ENCODE measurements at regions of chr1 and their contacts with region 1.

Region 1: GRCh38 chr1:168312718-168313604 is 32.3 kb downstream of the TBX19 start:
- DNase-seq: no peak
- H3K4me3 ChIP-seq: no peak overlapping the region
- H3K27ac ChIP-seq: no peak overlapping the region
- H3K4me1 ChIP-seq: no peaks in the 10 kb centered on the region
- H3K27me3 ChIP-seq: no peaks in the 10 kb centered on the region
- CTCF ChIP-seq: no peak
- POLR2A ChIP-seq: no peak

Region 2: DNA sequence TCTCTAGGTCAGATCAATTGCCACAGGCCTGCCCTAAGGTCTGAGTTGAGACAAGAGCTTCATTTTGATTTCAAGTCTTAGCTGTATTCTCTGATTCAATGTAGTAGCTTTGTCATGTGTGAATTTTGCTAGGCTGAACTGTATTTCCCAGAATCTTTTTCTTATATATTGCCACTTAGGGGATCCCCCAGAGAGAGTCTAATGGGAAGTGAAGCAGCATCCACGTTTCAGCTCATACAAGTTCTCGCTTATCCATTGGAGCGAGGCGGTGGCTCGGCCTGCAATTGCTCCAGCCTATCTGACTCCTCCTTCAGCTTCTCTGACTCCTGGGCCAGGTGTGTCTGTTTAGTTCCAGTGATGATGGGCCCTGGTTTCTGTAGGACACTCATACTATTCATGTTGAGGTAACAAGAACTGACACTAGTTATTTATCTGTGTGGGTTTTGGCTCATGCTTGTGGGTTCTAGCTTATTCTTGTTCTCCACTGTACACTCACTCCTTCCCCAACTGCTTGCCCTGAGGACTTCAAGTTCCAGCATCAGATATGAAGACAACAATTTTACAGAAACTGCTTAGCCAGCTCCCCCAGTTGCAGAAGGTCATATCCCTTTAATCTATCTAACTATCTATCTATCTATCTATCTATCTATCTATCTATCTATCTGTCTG is 15.9 kb after region 1 on chr1:
- CTCF ChIA-PET with region 1: no interaction called
- POLR2A ChIA-PET with region 1: no interaction called
- dilution Hi-C with region 1: no loop called
- intact Hi-C with region 1: loop called (anchors 2 kb)
- DNase-seq: no peak
- H3K4me3 ChIP-seq: no peak overlapping the region
- H3K27ac ChIP-seq: no peak overlapping the region
- H3K4me1 ChIP-seq: no peaks in the 10 kb centered on the region
- H3K27me3 ChIP-seq: no peaks in the 10 kb centered on the region
- CTCF ChIP-seq: no peak
- POLR2A ChIP-seq: no peak

Region 3: GRCh38 chr1:168811176-168811575 is 498.2 kb after region 1 on chr1:
- CTCF ChIA-PET with region 1: no interaction called
- POLR2A ChIA-PET with region 1: no interaction called
- dilution Hi-C with region 1: no loop called
- intact Hi-C with region 1: no loop called
- DNase-seq: no peak
- H3K4me3 ChIP-seq: no peak overlapping the region
- H3K27ac ChIP-seq: no peak overlapping the region
- H3K4me1 ChIP-seq: no peaks in the 10 kb centered on the region
- H3K27me3 ChIP-seq: no peaks in the 10 kb centered on the region
- CTCF ChIP-seq: no peak
- POLR2A ChIP-seq: no peak

Measured in endothelial cell of umbilical vein (primary cell).